Prostate gland (tissue), 2 donors: ENCODE measurements at regions of chr12 and their contacts with region 1.

Region 1: GRCh38 chr12:77925536-77926108 is 94.9 kb downstream of the NAV3 start:
- DNase-seq: peak; percentile 65
- H3K4me3 ChIP-seq: no peak overlapping the region
- H3K27ac ChIP-seq: no peak overlapping the region
- H3K4me1 ChIP-seq: no peaks in the 10 kb centered on the region
- H3K27me3 ChIP-seq: no peaks in the 10 kb centered on the region
- CTCF ChIP-seq: peak in 3 of 4 experiments; percentile 72 to 93 (median 91)
- POLR2A ChIP-seq: no peak

Region 2: DNA sequence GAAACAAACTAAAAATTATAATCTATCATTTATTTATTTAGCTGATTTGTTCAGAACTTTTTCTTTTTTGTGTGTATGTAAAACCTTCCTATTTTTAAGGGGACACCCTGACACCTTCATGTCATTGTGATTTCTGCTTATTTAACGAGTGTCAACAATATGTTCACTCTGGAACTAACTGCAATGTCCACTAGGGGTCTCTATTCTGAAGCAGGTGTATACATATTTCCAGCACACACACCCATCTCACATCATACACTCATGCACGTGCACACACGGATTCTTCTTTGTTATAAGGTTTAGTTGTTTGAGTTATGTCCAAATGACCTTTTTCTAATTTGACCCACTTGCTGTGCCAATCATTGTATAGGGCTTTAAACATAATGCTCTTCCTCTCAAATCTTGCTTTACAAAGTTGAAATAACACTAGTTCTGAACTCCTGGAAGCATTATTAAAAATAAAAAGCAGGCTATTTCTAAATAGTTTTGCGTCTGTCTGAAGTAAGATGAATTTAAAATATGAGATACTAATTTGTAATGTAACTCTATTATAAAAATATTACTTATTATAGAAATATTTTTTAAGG is 875.8 kb before region 1 on chr12:
- intact Hi-C with region 1: loop called (anchors 5 kb)
- DNase-seq: peak; percentile 39
- H3K4me3 ChIP-seq: no peak overlapping the region
- H3K27ac ChIP-seq: no peak overlapping the region
- H3K4me1 ChIP-seq: no peaks in the 10 kb centered on the region
- H3K27me3 ChIP-seq: no peaks in the 10 kb centered on the region
- CTCF ChIP-seq: peak; percentile 32 to 78 (median 66)
- POLR2A ChIP-seq: no peak

Region 3: GRCh38 chr12:77152623-77153193 is 772.9 kb before region 1 on chr12:
- intact Hi-C with region 1: loop called (anchors 5 kb)
- DNase-seq: no peak
- H3K4me3 ChIP-seq: no peak overlapping the region
- H3K27ac ChIP-seq: no peak overlapping the region
- H3K4me1 ChIP-seq: no peaks in the 10 kb centered on the region
- H3K27me3 ChIP-seq: no peaks in the 10 kb centered on the region
- CTCF ChIP-seq: peak in 3 of 4 experiments; percentile 22 to 53 (median 45)
- POLR2A ChIP-seq: no peak

Region 4: GRCh38 chr12:77724367-77724957 is 201.2 kb before region 1 on chr12:
- intact Hi-C with region 1: loop called (anchors 5 kb)
- DNase-seq: no peak
- H3K4me3 ChIP-seq: no peak overlapping the region
- H3K27ac ChIP-seq: no peak overlapping the region
- H3K4me1 ChIP-seq: no peaks in the 10 kb centered on the region
- H3K27me3 ChIP-seq: no peaks in the 10 kb centered on the region
- CTCF ChIP-seq: peak in 3 of 4 experiments; percentile 55 to 85 (median 79)
- POLR2A ChIP-seq: no peak

Region 5: DNA sequence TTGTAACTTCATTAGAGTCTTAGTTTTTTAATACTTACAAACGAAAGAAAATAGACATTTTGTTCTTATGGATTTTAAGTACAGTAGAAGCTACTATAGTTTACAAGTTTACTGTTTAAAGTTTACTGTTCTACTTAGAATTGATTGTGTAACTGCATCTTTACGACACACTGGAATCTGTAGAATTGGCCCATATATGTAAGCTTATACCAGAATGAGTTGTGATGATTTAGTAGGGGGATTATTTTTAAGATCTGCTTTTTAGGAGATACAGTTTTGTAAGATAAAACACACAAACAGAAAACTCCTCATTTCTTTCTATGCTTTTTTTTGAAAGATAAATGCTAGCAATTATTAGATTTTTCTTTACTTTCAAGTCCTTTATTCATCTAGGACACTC is 125.1 kb before region 1 on chr12:
- intact Hi-C with region 1: no loop called
- DNase-seq: no peak
- H3K4me3 ChIP-seq: no peak overlapping the region
- H3K27ac ChIP-seq: no peak overlapping the region
- H3K4me1 ChIP-seq: no peaks in the 10 kb centered on the region
- H3K27me3 ChIP-seq: no peaks in the 10 kb centered on the region
- CTCF ChIP-seq: no peak
- POLR2A ChIP-seq: no peak